IMR-90 (cell line): ENCODE measurements at regions of chr7 and their contacts with region 1.

Region 1: DNA sequence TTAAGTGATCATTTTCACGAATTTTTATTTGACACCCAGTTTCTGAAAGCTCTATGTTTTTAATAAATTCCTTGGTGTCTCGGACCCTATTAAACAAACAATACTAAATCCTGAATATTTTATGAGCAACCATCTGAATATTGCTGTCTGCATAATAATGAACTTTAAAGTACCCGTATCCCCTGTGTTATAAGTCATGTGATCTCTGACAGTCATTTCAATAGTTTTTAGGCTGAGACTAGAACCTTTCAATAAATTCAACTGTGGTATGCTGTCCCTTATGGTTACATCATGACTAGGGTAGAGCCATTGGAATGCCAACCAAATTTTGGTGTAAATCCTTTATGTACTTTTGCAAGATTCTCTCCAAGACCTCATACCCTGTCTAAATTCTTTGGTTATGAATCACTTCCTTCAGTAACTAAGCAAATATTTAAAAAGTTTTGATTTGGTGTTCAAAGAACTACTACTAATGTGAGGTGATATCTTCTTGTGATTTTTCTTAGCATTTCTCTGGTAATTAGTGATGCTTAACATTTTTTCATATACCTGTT is 20.8 kb upstream of the OR6B1 start:
- DNase-seq: peak; percentile 54
- ATAC-seq: peak; percentile 82
- H3K4me3 ChIP-seq: no peak overlapping the region
- H3K27ac ChIP-seq: no peak overlapping the region
- H3K4me1 ChIP-seq: peaks cover 3% of the 10 kb centered on the region; the same call in 1 of the 2 replicates
- H3K27me3 ChIP-seq: no peaks in the 10 kb centered on the region
- CTCF ChIP-seq: no peak
- POLR2A ChIP-seq: no peak
- RAD21 ChIP-seq: no peak

Region 2: DNA sequence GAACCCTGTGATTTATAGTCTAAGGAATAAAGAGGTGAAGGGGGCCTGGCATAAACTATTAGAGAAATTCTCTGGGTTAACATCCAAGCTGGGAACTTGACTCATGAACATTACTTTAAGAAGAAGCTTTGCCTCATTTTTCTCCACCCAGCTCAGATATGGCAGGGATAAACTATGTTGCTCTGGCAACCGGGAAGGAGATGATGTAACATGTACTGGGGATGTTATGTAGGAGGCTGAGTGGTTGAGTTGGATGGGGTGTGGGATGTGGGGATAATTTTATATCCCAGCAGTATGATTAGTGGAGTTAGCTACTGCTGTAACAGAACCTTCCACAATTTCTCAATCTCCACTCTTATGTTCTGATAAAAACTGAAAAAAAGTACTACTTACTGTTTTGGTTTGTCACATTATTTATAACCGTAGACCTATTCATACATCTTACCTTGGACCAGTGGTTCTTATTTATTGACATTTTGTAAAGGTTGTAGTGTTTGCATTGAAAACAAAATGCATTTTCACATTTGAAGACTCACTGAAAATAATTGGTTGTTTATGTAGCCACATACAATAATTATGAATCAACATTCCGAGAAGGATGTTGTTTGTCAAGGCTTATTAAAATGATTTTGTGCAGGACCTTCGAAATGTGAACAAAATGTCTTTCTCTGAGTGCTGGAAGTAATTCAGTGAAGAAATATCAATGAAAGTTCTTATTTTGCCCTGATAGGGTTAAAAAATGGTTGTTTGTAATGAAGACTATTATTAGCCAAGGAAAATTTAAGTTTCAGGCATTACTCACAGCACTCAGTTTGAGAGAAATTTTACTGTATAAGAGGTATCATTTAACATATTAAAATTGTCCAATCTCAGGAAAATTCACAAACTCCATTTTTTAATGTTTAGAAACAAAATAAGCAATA is 42.9 kb before region 1 on chr7:
- CTCF ChIA-PET with region 1: interaction called, 3 read pairs
- POLR2A ChIA-PET with region 1: no interaction called
- dilution Hi-C with region 1: no loop called
- in situ Hi-C with region 1: no loop called
- intact Hi-C with region 1: loop called (anchors 5 kb)
- DNase-seq: peak; percentile 85
- ATAC-seq: peak; percentile 67
- H3K4me3 ChIP-seq: no peak overlapping the region
- H3K27ac ChIP-seq: peak overlapping the region; percentile 85
- H3K4me1 ChIP-seq: peaks cover 21% of the 10 kb centered on the region
- H3K27me3 ChIP-seq: no peaks in the 10 kb centered on the region
- CTCF ChIP-seq: no peak
- POLR2A ChIP-seq: no peak
- RAD21 ChIP-seq: no peak

Region 3: GRCh38 chr7:144037414-144038035 is 58.2 kb after region 1 on chr7:
- CTCF ChIA-PET with region 1: no interaction called
- POLR2A ChIA-PET with region 1: no interaction called
- dilution Hi-C with region 1: no loop called
- in situ Hi-C with region 1: no loop called
- intact Hi-C with region 1: no loop called
- DNase-seq: no peak
- ATAC-seq: no peak
- H3K4me3 ChIP-seq: no peak overlapping the region
- H3K27ac ChIP-seq: no peak overlapping the region
- H3K4me1 ChIP-seq: no peaks in the 10 kb centered on the region
- H3K27me3 ChIP-seq: no peaks in the 10 kb centered on the region
- CTCF ChIP-seq: no peak
- POLR2A ChIP-seq: no peak
- RAD21 ChIP-seq: no peak

Region 4: GRCh38 chr7:144074373-144074772 is 95.1 kb after region 1 on chr7:
- CTCF ChIA-PET with region 1: no interaction called
- POLR2A ChIA-PET with region 1: no interaction called
- dilution Hi-C with region 1: no loop called
- in situ Hi-C with region 1: no loop called
- intact Hi-C with region 1: no loop called
- DNase-seq: no peak
- ATAC-seq: no peak
- H3K4me3 ChIP-seq: no peak overlapping the region
- H3K27ac ChIP-seq: no peak overlapping the region
- H3K4me1 ChIP-seq: no peaks in the 10 kb centered on the region
- H3K27me3 ChIP-seq: no peaks in the 10 kb centered on the region
- CTCF ChIP-seq: no peak
- POLR2A ChIP-seq: no peak
- RAD21 ChIP-seq: no peak